PC-9 (cell line): ENCODE measurements at regions of chr1 and their contacts with region 1.

Region 1: GRCh38 chr1:79353224-79353623 is 346.7 kb upstream of the ADGRL4 start:
- DNase-seq: peak in 1 of 2 experiments; percentile 3
- H3K4me3 ChIP-seq: no peak overlapping the region
- H3K27ac ChIP-seq: no peak overlapping the region
- H3K4me1 ChIP-seq: no peaks in the 10 kb centered on the region
- H3K27me3 ChIP-seq: no peaks in the 10 kb centered on the region
- CTCF ChIP-seq: peak; percentile 75

Region 2: DNA sequence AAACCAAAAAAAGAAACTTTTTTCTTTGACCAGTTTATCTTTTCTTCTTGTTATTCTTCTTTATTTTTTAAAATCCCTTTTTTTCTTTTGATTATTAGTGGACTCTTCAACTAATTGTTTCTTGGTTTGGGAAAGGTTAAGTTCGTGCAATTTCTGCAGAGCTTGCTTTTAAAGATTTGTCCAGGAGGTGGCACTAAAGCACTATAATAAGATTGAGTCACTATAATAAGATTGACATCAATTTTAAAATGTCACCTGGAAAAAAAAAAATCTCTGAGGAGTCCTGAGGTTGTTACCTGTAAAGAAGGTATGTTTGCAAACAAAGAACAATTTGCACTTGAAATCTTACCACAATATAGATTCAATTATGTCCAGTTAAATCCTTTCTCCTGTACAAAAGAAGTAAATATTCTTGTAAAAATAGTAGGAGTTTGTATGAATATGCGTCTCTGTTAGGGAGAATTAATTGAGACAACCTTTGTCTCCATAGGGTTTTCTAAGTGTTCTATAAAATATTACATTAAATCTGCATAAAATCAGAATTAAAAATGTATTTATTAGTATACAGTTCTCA is 513.4 kb before region 1 on chr1:
- CTCF ChIA-PET with region 1: no interaction called
- POLR2A ChIA-PET with region 1: no interaction called
- intact Hi-C with region 1: loop called (anchors 10 kb)
- DNase-seq: peak in 1 of 2 experiments; percentile 6
- H3K4me3 ChIP-seq: no peak overlapping the region
- H3K27ac ChIP-seq: no peak overlapping the region
- H3K4me1 ChIP-seq: no peaks in the 10 kb centered on the region
- H3K27me3 ChIP-seq: no peaks in the 10 kb centered on the region
- CTCF ChIP-seq: peak; percentile 90

Region 3: GRCh38 chr1:79259388-79260336 is 93.6 kb before region 1 on chr1:
- CTCF ChIA-PET with region 1: no interaction called
- POLR2A ChIA-PET with region 1: no interaction called
- intact Hi-C with region 1: loop called (anchors 2 kb)
- DNase-seq: no peak
- H3K4me3 ChIP-seq: no peak overlapping the region
- H3K27ac ChIP-seq: no peak overlapping the region
- H3K4me1 ChIP-seq: no peaks in the 10 kb centered on the region
- H3K27me3 ChIP-seq: no peaks in the 10 kb centered on the region
- CTCF ChIP-seq: peak; percentile 75

Region 4: DNA sequence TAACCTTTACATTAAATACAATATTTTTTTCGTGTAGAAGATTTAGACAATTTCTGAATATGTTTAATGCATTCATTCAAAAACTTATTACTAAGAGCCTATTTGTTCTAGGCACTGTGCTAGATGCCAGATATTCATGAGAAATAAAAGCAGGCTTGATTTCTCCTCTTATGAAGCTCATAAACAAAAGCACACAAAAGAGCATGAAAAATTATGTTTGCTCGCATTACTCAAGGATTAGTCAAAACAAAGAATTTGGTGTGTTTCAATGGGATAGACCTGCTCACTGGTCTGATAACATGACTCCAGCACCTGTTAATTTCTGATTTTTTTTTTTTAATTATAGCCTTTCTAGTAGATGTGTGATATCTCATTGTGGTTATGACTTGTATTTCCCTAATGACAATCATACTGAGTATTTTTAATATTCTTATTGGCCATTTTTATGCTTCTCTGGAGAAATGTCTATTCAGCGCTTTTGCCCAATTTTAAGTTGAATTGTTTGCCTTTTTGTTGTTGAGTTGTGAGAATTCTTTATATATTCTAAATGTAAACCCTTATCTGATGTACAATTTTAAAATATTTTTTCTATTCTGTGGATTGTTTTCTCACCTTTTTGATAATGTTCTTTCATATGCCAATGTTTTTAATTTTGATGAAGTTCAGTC is 35.6 kb after region 1 on chr1:
- CTCF ChIA-PET with region 1: no interaction called
- POLR2A ChIA-PET with region 1: no interaction called
- intact Hi-C with region 1: no loop called
- DNase-seq: peak in 1 of 2 experiments; percentile 31
- H3K4me3 ChIP-seq: no peak overlapping the region
- H3K27ac ChIP-seq: no peak overlapping the region
- H3K4me1 ChIP-seq: no peaks in the 10 kb centered on the region
- H3K27me3 ChIP-seq: no peaks in the 10 kb centered on the region
- CTCF ChIP-seq: no peak